Activated CD4-positive, alpha-beta memory T cell treated with anti-CD3 and anti-CD28 coated beads for 36 hours (primary cell): ENCODE measurements at regions of chr9 and their contacts with region 1.

Region 1: DNA sequence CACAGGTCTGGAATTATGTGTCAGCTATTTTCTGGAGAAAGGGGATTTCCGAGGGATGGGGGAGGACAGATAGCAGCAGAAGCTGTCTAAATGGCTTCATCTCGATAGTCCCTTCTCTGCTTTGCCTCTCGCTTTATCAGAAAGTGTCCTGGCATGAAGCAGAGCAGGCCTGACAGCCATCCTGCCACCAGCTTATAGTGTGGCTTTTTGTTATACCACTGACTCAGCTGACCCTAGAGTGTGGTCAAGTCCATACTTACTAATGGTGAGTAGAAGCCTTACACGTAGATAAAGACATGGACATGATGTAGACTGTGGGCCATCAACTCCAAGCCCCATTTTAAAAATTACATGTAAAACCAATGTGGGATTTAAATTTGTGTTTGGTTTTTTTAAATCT is 50.0 kb downstream of the RCL1 start:
- DNase-seq: no peak
- H3K4me3 Mint-ChIP-seq: no peak overlapping the region
- H3K27ac Mint-ChIP-seq: peak overlapping the region; percentile 18
- H3K4me1 Mint-ChIP-seq: peaks cover 40% of the 10 kb centered on the region
- H3K27me3 Mint-ChIP-seq: no peaks in the 10 kb centered on the region

Region 2: DNA sequence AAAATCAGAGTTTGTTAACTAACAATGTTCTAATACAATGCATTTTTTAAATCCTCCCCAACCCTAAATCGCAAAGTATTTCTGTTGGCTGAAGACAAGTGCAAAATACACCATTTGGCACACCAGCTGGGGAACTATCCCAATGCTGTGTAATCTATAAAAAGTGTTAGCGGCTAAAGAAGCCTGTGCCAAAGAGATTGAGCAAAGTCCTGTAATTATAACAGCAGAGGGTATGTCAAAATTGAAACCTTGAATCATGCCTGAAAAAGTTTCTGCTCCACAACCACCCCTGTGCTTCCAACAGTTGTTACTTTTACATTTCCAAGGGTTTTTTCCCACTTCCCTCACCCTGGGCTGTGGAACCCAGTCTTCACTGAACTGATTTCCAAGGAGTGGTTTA is 263.7 kb before region 1 on chr9:
- CTCF ChIA-PET with region 1: no interaction called
- POLR2A ChIA-PET with region 1: no interaction called
- intact Hi-C with region 1: no loop called
- DNase-seq: no peak
- H3K4me3 Mint-ChIP-seq: no peak overlapping the region
- H3K27ac Mint-ChIP-seq: no peak overlapping the region
- H3K4me1 Mint-ChIP-seq: no peaks in the 10 kb centered on the region
- H3K27me3 Mint-ChIP-seq: no peaks in the 10 kb centered on the region

Region 3: DNA sequence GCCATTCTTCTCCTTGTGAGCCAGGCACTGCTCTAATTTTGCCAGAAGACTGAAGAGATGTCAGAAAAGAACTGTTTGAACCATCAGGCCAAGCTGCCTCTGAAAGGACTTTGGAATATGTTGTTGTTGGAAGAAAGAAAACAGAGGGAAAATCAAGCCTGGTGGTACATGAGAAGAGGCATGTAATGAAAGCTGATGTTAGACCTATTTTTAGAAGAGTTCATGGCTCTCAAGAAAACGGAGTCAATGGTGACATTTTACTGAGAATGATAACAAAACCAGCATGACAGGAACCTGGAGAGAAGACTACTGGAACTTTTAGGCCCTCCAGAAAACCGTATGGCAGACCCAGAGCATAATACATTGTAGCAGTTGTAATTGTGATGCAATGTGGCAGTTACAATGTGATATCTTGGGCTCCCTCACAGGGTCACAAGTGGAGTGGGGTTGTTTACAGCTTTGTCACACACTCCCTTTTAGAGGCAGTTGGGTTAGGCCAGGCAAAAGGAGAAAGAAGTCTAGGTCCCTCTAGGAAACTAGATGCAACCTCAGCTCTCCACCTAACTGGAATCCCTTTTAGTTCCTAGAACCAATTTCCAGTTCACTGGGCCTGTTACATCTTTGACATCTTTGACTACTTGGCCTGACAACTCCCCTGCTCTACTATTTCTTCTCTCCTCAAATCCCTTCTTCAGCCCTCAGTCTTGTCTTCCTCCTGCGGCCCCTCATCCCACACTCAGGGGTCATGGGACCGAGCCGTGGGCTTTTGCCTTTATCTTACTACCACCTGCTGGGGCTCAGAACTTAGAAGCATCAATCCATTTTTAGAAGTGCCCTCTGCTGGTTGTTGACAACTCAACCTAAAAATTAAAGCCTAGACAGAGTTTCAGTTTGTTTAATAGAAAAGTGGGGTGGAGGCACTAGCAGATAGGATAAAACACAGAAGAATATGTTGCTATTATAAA is 81.1 kb after region 1 on chr9:
- CTCF ChIA-PET with region 1: interaction called, 3 read pairs
- POLR2A ChIA-PET with region 1: no interaction called
- intact Hi-C with region 1: loop called (anchors 5 kb)
- DNase-seq: no peak
- H3K4me3 Mint-ChIP-seq: no peak overlapping the region
- H3K27ac Mint-ChIP-seq: no peak overlapping the region
- H3K4me1 Mint-ChIP-seq: peaks cover 22% of the 10 kb centered on the region
- H3K27me3 Mint-ChIP-seq: no peaks in the 10 kb centered on the region